Cardiac septum (tissue), 1 donor: ENCODE measurements at regions of chr10 and their contacts with region 1.

Region 1: DNA sequence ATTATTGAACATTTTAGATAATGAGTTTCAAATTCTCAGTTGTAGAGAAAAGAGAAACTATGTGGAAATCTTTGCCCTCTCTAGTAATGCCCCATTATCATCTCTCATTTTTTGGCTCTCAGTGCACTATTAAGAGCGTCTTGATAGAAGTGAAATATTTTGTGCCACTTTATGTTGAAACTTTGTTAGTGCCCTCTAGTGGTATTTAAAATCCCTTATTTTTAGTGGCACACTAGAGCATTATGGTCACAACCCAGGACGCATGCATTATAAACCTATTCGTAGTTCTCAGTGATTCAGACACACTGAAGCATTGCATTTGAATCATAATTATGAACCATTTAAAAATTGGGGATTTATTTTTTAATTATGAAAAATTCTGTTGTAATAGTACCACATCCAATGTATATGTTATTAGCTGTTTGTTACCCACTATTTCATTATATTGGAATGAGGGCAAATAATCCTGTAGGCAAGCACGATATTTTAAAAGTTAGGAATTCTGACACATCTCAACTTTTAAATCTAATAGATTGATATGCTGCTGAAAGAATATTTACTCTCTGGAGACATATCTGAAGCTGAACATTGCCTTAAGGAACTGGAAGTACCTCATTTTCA is 21.9 kb downstream of the PDCD4 start:
- DNase-seq: no peak

Region 2: DNA sequence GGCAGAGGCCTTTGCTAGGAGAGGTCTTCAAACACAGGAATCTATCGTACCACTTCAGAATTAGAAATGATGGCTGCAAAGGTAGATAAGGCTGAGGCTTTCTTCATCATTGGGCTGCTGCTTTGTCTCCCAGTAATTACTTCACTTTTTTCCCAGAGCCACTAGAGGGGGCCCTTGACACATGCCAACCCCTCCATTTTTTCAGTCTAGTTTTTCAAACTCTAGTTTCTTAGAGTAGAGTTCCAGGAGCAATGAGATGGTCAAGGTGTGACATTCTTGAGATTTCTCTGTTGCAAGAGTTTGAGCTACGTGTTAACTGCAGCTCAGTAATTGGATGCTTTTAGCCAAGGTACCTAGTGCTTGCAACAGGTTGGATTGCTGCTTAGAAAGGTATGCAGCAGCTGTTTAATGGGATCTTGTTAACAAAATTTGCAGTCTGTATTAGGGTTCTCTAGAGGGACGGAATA is 283.3 kb before region 1 on chr10:
- intact Hi-C with region 1: loop called (anchors 10 kb)
- DNase-seq: no peak

Region 3: DNA sequence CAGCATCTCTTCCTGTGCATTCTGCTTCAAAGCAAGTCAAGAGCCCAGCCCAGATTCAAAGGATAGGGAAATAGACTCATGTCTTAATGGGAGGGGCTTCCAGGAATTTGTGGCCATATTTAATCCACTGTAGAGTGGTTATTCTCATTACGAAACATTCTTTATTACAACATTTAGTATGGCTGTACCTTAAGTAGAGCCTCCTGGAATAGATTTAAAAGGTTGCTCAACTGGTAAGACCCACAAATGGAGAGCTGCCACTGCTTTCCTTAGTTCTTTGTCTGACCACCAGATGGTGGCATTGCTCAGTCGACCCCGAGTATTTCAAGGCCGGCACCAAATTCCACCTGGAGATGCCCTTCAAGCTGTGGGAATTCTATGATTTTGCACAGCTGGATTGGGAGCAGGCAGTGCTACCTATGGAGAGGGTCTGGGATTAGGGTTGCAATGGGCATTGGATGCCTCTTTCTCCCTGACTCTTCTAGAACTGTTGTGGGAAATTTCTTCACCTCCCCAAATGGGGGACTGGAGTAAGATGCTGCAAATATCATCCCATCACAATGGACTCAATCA is 147.3 kb before region 1 on chr10:
- intact Hi-C with region 1: loop called (anchors 2 kb)
- DNase-seq: no peak

Region 4: GRCh38 chr10:110803830-110804338 is 89.8 kb before region 1 on chr10:
- intact Hi-C with region 1: loop called (anchors 5 kb)
- DNase-seq: peak; percentile 72

Region 5: GRCh38 chr10:110936757-110937156 is 43.1 kb after region 1 on chr10:
- intact Hi-C with region 1: no loop called
- DNase-seq: no peak